ENCODE measurements at regions of chr7 and their contacts with region 1.

Region 1: GRCh38 chr7:87615197-87615596 is 13.0 kb upstream of the RUNDC3B start:
- DNase-seq: no peak
- ATAC-seq: no peak
- H3K4me3 ChIP-seq: no peak overlapping the region
- H3K27ac ChIP-seq: no peak overlapping the region
- H3K4me1 ChIP-seq: no peaks in the 10 kb centered on the region
- H3K27me3 ChIP-seq: no peaks in the 10 kb centered on the region; a peak in 1 of 4 replicates
- CTCF ChIP-seq: no peak
- EP300 ChIP-seq: no peak
- POLR2A ChIP-seq: no peak
- RAD21 ChIP-seq: no peak

Region 2: DNA sequence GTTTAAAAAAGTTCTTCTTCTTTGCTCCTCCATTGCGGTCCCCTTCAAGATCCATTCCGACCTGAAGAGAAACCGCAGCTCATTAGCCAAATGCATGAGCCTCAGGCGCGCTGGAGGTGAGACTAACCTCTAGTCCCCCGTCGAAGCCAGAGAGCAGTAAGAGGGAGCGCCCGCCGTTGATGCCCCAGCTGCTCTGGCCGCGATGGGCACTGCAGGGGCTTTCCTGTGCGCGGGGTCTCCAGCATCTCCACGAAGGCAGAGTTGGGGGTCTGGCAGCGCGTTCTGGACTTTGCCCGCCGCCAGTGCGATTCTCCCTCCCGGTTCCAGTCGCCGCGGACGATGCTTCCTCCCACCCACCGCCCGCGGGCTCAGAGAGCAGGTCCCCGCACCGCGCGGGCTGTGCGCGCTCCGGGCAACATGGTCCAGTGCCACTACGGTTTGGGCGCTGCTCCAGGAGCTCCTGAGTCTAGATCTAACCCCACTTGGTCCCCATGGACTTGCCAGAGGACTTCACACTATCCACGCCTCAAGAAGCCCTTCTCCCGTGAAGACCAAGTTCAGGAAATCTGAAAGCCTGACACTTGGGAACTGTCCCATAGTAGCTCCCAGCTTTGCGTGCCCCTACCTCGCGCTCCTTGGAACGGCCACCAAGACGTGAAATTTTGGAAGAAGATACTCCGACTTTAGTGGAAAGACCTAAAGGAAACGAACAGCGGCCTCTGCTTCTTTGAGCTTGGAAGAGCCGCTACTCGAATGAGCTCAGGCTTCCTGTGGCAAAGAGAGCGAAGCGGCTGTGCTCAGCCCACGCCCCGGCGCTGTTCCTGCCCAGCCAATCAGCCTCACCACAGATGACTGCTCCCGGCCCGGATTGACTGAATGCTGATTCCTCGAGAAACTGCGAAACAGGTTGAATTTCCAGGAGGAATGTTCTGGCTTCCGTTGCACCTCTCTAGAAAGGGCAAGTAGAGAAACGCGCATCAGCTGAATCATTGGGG is 14.8 kb before region 1 on chr7 and contains the start of gene ABCB1:
- CTCF ChIA-PET with region 1: interaction called, 14 read pairs
- POLR2A ChIA-PET with region 1: no interaction called
- RAD21 ChIA-PET with region 1: no interaction called
- SMC1A ChIA-PET with region 1: interaction called, 4 read pairs
- in situ Hi-C with region 1: no loop called
- intact Hi-C with region 1: no loop called
- DNase-seq: no peak
- ATAC-seq: peak; percentile 77
- H3K4me3 ChIP-seq: peak within 1 kb of the TSS; percentile 50; the same call in 1 of the 2 replicates
- H3K27ac ChIP-seq: no peak within 1 kb of the TSS
- H3K4me1 ChIP-seq: peaks cover 22% of the 10 kb centered on the region
- H3K27me3 ChIP-seq: peaks cover 0 to 7% of the 10 kb centered on the region in 2 experiments; a peak in 1 of 4 replicates
- CTCF ChIP-seq: no peak; a peak in 1 of 6 replicates
- EP300 ChIP-seq: 0 out of 4 replicates have a peak, but pooled peaks of 1 of the 2 experiments have one; percentile 12
- POLR2A ChIP-seq: no peak
- RAD21 ChIP-seq: no peak
- polyA plus RNA-seq, gene ABCB1: 0.40 to 1.1 TPM

Measured in GM12878 (cell line).